GM13977 (cell line): ENCODE measurements at regions of chr4 and their contacts with region 1.

Region 1: DNA sequence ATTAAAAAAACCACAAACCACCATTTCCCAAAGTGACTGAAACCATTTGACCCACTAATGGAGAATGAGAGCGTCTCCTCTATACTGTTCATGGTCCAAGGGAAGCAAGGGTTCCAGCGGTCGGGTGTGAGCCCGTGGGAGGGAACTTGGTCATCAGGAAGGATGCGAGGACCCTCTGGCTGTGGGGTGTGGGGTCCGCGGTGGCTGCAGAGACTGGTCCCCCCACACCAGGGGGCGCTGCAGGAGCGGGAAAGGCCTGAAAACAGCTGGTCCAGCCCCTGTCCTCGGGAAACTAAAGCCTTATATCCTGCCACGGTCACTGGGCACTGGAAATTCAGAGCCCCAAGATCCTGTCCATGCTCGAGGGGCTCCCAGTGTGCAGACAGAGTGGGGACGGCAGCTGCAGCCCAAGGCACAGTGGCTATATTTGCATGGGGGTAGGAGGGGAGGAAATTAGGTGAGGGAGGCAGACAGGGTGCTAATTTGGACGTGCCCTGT is 4.3 kb downstream of the BLOC1S4 start:
- DNase-seq: peak; percentile 91
- CTCF ChIP-seq: peak; percentile 96

Region 2: DNA sequence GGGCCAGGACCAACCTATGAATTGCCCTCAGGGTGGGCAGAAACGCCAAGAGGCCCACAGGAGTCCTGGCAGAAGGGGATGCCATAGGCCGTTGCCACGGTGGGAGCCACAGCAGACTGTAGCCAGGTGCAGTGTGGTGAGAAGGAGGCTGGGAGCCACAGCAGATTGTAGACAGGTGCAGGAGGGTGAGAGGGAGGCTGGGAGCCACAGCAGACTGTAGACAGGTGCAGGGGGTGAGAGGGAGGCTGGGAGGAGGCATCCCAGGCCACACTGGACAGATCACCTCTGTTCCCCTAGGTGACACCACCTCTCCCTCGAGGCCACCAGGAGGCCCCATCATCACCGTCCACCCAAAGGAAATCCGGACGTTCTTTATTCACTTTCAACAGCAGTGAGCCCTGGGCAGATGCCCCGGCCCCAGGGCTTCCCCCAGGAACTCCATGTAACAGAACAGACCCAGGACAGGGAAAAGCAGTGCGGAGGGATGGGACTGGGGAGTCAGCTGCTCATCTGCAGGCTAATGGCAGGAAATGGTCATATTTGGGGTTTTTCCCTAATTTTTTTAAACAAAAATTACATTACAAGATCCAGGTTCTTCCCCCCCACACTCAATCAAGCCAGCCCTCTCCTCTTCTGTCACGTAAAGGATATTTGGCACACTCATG is 99.2 kb before region 1 on chr4:
- in situ Hi-C with region 1: no loop called
- DNase-seq: no peak
- CTCF ChIP-seq: no peak

Region 3: DNA sequence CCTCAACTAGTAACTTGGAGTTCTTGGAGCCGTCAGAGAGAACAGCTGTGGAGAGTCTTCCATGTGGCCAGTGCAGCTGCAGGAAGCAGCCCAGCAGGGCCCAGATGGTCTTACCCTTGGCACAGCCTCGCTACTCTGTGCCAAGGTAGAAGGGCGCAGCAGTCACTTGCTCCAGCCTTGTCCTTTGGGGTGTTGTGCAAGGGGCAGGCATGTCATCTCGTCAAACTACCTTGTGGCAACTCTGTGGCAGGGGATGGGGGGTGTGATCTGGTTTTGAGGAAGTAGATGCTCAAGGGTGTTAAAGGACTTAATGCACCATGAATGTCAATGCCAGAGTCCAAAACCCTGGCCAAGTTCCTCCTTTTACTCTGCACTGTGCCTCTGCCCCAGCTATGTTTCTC is 155.2 kb after region 1 on chr4:
- in situ Hi-C with region 1: loop called (anchors 5 kb)
- DNase-seq: no peak
- CTCF ChIP-seq: no peak